Left cardiac atrium (tissue), 4 donors: ENCODE measurements at regions of chr14 and their contacts with region 1.

Region 1: GRCh38 chr14:57317316-57317715 is 48.5 kb downstream of the AP5M1 start:
- DNase-seq: peak; percentile 55
- ATAC-seq: peak; percentile 61 to 63

Region 2: DNA sequence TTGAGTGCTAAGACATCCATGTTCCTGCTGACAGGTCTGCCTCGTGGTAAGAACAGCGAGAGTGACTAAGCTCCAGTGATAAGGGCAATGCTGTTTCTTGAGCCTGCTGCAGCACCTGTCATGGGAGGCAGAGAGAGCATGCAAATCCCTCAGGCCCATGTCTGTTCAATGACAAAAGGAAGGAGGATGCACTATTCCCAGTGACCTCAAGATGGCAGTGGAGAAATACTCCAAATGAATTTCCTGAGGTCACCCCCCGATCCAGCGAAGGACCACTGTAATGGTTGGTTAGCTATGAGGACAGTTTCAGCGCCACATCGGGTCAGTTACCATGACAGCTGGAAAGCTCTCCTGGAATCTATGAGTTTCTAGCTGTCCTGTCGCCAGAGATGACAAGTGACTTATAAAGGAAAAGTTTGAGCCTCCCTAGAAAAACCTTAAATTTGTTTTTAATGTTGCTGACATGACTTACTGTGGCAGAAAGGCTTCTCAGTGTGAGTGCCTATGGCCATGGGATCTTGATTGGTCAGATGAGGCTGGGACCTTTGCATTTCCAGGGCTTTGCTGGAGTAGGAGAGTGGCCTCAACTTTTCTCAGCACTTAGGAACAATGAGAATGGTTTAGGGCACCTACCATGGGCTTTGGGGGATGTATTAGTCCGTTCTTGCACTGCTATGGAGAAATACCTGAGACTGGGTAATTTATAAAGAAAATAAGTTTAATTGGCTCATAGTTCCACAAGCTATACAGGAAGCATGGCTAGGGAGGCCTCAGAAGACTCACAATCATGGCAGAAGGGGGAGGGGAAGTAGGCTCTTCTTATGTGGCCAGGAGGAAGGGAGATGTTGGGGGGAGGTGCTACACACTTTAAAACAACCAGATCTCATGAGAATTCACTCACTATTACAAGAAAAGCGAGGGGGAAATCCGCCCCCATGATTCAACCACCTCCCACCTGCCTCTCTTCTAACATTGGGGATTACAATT is 825.7 kb before region 1 on chr14:
- intact Hi-C with region 1: loop called (anchors 2 to 10 kb)
- DNase-seq: no peak
- ATAC-seq: peak; percentile 55 to 65

Region 3: GRCh38 chr14:56555921-56556570 is 761.3 kb before region 1 on chr14:
- intact Hi-C with region 1: loop called in 1 of 2 experiments (anchors 5 kb)
- DNase-seq: no peak
- ATAC-seq: no peak

Region 4: GRCh38 chr14:57755018-57755530 is 437.8 kb after region 1 on chr14:
- intact Hi-C with region 1: no loop called
- DNase-seq: no peak
- ATAC-seq: no peak